Mammary epithelial cell (primary cell): ENCODE measurements at regions of chr22 and their contacts with region 1.

Region 1: DNA sequence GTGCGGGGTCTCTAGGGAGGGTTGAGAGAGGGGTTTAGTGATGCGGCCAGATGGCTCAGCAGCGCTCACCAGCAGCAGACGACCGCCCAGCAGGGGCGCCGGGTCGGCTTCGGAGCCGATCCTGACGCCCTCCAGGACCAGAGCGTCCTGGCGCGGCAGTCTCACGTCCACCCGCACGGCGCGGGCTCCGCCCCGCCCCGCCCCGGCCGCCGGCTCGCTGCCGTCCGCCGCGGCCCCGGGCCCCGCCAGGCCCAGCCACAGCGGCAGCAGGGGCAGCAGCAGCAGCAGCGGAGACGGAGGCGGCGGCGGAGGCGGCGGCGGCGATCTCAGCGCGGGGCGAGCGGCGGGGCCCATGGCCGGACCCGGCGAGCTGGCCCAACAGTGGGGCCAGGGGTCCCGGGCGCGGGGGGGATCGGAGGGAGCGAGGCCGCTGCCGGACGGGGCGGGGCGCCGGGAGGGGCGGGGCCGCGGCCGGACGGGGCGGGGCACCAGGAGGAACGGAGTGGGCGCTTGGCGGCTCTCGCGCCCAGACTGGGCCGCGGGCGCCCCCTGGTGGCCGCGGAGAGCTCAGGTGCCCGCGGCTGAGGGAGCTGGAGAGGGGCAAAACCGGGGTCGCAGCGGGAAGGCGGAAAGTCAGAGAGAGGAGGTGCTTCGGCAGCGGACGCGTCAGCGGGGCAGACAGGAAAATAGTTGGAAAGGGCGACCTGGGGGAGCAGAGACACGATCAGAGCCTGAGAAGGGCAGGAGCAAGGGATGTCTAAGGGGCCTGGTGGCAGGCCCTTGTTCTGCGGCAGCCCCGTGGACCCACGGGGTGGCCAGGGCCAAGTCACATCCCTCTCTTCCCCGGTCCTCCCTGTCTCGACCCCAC is at the start of gene RNF215:
- DNase-seq: peak; percentile 59
- H3K4me3 ChIP-seq: peak within 1 kb of the TSS; percentile 46 to 79 (median 61)
- H3K27ac ChIP-seq: no peak within 1 kb of the TSS
- H3K4me1 ChIP-seq: peaks cover 11% of the 10 kb centered on the region
- H3K27me3 ChIP-seq: no peaks in the 10 kb centered on the region
- CTCF ChIP-seq: peak; percentile 42 to 83
- total RNA-seq, gene RNF215: 21.6 to 22.0 TPM

Region 2: GRCh38 chr22:30104501-30105156 is 282.6 kb before region 1 on chr22:
- CTCF ChIA-PET with region 1: no interaction called
- dilution Hi-C with region 1: no loop called
- in situ Hi-C with region 1: loop called (anchors 10 to 25 kb)
- intact Hi-C with region 1: loop called (anchors 1 kb)
- DNase-seq: no peak
- H3K4me3 ChIP-seq: no peak overlapping the region
- H3K27ac ChIP-seq: no peak overlapping the region
- H3K4me1 ChIP-seq: no peaks in the 10 kb centered on the region
- H3K27me3 ChIP-seq: no peaks in the 10 kb centered on the region
- CTCF ChIP-seq: no peak

Region 3: DNA sequence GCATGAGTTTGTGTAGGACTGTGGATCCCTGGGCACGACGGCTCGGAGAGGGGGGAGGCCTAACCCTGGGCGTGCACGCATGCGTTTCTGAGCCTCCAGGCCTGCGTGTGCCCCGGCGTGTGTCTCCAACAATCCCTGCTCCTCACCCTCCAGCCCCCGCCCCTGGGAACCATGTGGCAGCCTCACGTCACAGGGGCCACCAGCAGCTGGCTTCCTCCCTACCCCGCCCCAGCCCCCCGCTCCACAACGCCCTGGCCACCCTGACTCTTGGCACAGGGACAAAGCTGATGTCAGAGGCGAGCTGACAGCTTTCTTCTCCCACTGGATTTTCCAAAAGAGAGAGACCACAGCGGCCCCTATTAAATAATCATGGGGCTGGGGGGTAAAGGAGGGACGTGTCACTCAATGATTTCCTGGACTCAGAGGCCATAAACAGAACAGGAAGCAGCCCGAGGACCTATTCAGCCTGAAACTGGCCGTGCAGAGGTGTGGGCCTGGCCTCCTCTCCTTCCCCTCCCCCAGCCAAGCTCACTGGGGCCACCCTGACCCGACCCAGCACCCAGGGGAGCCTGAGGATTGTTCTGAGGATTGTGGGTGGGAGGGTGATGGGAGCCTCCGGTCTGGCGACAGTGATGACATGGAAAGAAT is 133.9 kb before region 1 on chr22:
- CTCF ChIA-PET with region 1: no interaction called
- dilution Hi-C with region 1: no loop called
- in situ Hi-C with region 1: no loop called
- intact Hi-C with region 1: loop called (anchors 1 kb)
- DNase-seq: no peak
- H3K4me3 ChIP-seq: no peak overlapping the region
- H3K27ac ChIP-seq: no peak overlapping the region
- H3K4me1 ChIP-seq: peaks cover 44% of the 10 kb centered on the region
- H3K27me3 ChIP-seq: no peaks in the 10 kb centered on the region
- CTCF ChIP-seq: no peak

Region 4: GRCh38 chr22:30289134-30289979 is 97.8 kb before region 1 on chr22 and contains the start of gene CASTOR1:
- CTCF ChIA-PET with region 1: interaction called, 18 read pairs
- dilution Hi-C with region 1: loop called (anchors 5 kb)
- in situ Hi-C with region 1: loop called (anchors 10 kb)
- intact Hi-C with region 1: loop called (anchors 1 kb)
- DNase-seq: peak; percentile 97
- H3K4me3 ChIP-seq: peak within 1 kb of the TSS; percentile 64 to 91 (median 71)
- H3K27ac ChIP-seq: peak within 1 kb of the TSS; percentile 22
- H3K4me1 ChIP-seq: peaks cover 35% of the 10 kb centered on the region
- H3K27me3 ChIP-seq: no peaks in the 10 kb centered on the region
- CTCF ChIP-seq: no peak
- total RNA-seq, gene CASTOR1: 8.7 to 9.7 TPM

Region 5: DNA sequence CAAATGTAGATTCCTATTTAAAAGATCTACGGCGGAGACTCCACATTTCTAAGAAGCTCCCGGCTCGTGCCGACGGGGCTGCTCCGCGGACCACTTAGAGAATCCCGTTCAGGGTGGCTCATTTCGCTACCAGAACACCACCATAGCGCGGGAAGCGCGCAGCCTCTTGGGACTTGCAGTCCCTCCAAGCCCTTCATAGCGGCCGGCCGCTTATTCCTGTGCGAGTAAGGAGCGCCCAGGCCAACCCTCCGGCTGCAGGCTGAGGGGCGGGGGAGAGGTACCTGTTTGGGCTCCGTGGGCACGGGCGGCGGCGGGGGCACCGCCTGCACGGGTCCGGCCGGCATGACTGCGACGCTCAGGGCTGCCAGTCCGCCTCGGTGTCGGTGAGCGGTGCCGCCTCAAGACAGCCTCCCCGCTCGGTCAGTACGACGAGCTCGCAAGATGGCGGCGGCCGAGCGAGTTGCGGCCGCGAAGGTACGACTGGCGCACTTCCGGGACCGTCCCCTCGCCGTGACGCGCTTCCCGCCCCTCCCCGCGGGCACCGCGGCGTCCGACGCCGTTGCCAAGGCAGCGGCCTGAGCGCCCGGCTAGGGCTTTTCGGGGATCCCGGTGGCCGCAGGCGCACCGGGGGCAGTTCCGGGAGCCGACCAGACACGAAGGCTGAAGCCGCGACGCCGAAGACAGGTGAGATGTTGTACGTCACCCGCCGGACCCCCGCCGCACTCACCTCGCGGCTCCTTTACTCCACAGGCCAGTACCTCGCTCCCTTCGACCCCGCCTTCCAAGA is 30.6 kb before region 1 on chr22 and contains the starts of genes CCDC157 and SF3A1:
- CTCF ChIA-PET with region 1: no interaction called
- dilution Hi-C with region 1: no loop called
- in situ Hi-C with region 1: no loop called
- intact Hi-C with region 1: loop called (anchors 2 kb)
- DNase-seq: peak; percentile 91
- H3K4me3 ChIP-seq: peak within 1 kb of the TSS; percentile 75 to 89 (median 85)
- H3K27ac ChIP-seq: peak within 1 kb of the TSS; percentile 85
- H3K4me1 ChIP-seq: peaks cover 15% of the 10 kb centered on the region
- H3K27me3 ChIP-seq: no peaks in the 10 kb centered on the region
- CTCF ChIP-seq: no peak
- total RNA-seq, gene CCDC157: 1.9 to 3.2 TPM
- total RNA-seq, gene SF3A1: 45.0 to 163 TPM

Region 6: DNA sequence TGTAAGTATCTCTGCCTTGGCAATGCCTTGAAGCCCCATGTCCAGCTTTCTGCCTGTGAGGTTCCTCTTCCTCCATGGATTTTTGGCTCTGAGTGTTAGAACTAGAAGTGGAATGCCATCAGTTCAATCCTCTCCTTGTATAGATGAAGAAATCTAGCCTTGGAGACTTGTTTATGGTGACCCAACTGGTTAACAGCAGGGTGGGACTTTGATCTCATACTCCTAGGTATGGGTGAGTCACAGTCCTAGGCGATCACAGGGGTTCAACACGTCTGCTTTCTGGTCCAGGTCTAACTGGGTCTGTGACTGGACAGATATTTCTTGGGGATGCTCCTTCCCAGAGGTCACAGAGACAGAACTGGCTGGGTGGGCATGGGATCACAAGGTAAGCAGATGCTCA is 29.2 kb after region 1 on chr22:
- CTCF ChIA-PET with region 1: no interaction called
- dilution Hi-C with region 1: no loop called
- in situ Hi-C with region 1: no loop called
- intact Hi-C with region 1: no loop called
- DNase-seq: peak; percentile 68
- H3K4me3 ChIP-seq: no peak overlapping the region
- H3K27ac ChIP-seq: peak overlapping the region; percentile 45
- H3K4me1 ChIP-seq: peaks cover 78% of the 10 kb centered on the region
- H3K27me3 ChIP-seq: no peaks in the 10 kb centered on the region
- CTCF ChIP-seq: no peak

Region 7: GRCh38 chr22:30444632-30445437 is 57.6 kb after region 1 on chr22:
- CTCF ChIA-PET with region 1: no interaction called
- dilution Hi-C with region 1: no loop called
- in situ Hi-C with region 1: no loop called
- intact Hi-C with region 1: loop called (anchors 1 kb)
- DNase-seq: peak; percentile 34
- H3K4me3 ChIP-seq: no peak overlapping the region
- H3K27ac ChIP-seq: no peak overlapping the region
- H3K4me1 ChIP-seq: peaks cover 14% of the 10 kb centered on the region
- H3K27me3 ChIP-seq: no peaks in the 10 kb centered on the region
- CTCF ChIP-seq: peak; percentile 74 to 80

Region 8: GRCh38 chr22:30485362-30485988 is 98.3 kb after region 1 on chr22:
- CTCF ChIA-PET with region 1: no interaction called
- dilution Hi-C with region 1: no loop called
- in situ Hi-C with region 1: no loop called
- intact Hi-C with region 1: loop called (anchors 1 kb)
- DNase-seq: peak; percentile 35
- H3K4me3 ChIP-seq: no peak overlapping the region
- H3K27ac ChIP-seq: no peak overlapping the region
- H3K4me1 ChIP-seq: no peaks in the 10 kb centered on the region
- H3K27me3 ChIP-seq: no peaks in the 10 kb centered on the region
- CTCF ChIP-seq: peak; percentile 83 to 90